ENCODE measurements at regions of chr12 and their contacts with region 1.

Region 1: GRCh38 chr12:93502802-93503623 is 35.7 kb downstream of the MRPL42 start:
- DNase-seq: no peak
- ATAC-seq: no peak

Region 2: GRCh38 chr12:93766796-93767523 is 263.9 kb after region 1 on chr12:
- intact Hi-C with region 1: loop called in 1 of 2 experiments (anchors 10 kb)
- DNase-seq: no peak
- ATAC-seq: peak; percentile 84 to 90

Region 3: DNA sequence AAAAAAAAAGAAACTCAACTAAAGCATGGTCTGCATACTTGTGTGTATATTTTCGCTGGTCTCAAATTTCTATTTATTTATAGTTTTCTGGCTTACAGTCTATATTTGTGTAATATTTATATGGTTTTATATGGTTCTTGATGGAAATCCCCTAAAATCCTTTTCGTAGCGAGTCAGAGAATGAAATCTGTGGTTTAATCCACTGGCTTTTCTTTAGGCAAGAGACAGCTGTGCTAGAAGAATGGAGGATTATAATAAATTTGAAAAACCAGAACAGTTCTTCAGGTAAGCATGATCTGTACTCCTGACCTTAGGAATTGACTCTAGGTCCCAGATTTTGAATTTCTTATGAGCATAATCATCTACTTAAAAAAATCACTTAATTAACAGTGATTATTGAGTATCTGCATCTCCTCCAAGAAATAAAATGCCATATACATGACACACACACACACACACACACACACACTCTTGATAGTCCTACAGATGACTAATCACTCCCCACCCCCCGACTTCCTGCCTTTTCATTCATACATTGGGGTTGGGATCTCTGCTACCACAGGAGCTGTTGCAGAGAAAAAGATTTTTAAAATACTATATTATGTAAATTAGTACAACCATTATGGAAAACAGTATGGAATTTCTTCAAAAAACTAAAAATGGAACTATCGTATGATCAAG is 287.6 kb after region 1 on chr12:
- intact Hi-C with region 1: no loop called
- DNase-seq: no peak
- ATAC-seq: no peak

Region 4: GRCh38 chr12:93990832-93991803 is 488.1 kb after region 1 on chr12:
- intact Hi-C with region 1: loop called in 1 of 2 experiments (anchors 10 kb)
- DNase-seq: peak; percentile 61
- ATAC-seq: peak; percentile 87 to 93

Region 5: DNA sequence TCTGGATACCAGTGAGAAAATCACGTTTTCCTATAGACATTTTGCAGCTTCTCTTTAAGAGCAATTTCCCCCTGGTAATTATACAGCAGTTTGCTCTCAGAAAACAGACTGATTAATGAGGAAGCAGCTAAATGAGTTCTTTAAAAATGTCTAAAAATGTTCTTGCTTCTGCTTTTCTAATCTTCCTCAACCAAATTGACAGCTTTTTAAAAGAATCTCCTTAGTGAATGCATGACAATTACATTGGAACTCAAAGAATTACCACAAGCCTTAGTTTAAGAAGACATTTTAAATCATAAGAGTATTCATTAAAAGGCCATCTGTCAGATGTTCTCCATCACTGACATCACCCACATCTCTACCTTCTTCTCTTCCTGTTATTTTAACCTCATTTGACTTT is 509.6 kb after region 1 on chr12:
- intact Hi-C with region 1: no loop called
- DNase-seq: no peak
- ATAC-seq: no peak

Region 6: DNA sequence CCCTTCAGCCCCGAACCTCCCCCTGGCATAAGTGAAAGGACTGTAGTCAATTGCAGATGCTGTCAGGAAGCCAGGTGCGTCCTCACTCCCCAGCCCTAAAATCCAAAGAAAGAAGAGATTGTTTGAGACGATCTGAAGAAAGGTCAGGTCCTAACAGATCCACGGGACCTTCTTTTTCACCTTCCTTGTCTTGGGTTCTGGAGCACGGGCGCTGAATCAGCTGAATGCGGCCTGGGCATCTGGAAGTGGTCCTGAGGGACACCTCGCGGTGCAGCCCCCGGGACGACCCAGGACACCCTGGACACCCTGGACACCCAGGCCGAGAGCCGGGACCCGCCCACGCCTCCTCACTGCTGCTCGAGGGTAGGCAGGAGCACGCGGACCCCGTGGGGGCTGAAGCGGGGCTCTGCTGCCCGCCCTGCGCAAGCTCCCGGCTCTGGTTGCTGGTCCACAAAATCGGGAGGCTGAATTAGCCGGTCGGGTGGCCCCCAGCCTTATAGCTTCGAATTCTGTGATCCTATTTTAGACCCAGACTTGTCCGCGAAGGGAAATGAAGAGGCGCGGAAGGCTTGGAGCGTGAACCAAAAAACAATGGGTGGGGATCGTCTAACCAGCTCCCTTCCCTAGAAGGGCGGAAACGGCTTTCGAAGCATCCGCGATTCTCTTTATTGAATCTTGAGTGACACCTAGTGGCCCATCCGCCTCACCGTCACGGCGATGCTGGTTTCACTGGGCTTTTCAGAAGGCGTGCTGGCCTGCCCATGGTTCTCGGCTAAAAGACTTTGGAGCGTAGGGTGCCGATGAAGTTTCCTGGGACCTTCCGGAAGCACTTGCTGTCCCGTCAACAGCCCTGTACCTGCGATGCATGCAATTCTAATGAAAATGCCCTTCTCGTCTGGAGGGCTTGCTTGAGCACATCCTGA is 599.0 kb after region 1 on chr12:
- intact Hi-C with region 1: loop called (anchors 2 kb)
- DNase-seq: peak; percentile 89
- ATAC-seq: peak; percentile 86 to 92

Measured in left cardiac atrium (tissue), 4 donors.